CD4-positive, alpha-beta memory T cell (primary cell): ENCODE measurements at regions of chr5 and their contacts with region 1.

Region 1: DNA sequence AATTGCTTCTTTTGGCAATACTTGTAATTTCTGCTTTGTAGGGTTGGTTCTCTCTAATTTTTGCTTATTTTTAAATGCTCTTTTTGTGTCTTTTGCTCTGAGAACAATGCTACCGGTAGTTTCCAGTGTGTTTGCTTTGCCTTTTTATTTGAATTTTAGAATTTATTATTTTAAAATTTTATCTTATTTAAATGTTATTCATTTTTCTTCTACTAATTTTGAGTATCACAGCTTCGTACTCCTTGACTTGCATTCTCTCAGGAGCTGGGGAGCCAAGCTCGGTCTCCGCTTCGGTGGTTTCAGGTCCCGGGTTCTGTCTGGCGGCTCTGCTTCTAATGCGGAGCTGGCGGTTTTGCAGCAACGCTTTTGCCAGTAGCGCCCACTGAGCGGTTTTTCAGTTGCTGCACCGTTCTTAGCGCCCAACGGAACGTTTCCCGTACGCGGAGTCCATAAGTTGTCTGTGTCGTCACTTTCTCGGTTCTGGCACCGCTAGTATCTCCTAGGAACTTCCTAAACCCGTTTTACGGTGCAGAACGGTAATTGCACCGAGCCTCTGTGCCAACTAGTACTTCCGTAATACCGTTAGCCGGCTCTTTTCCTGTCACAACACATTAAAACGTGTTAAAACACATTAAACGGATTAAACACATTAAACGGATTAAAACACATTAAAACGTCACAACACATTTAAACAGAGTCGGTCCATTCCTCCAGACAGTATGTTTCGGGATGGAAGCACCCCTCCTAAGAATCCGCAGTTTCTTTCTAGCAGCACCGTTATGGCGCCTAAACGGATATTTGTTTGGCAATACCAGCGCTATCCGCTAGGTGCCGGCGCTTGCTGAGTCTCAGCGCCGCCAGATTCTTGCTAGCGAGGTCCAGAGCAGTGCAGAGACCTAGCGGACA is 45.6 kb downstream of the ANXA2R start:
- DNase-seq: peak; percentile 86 to 89 (median 88)
- H3K4me3 ChIP-seq: peak overlapping the region; percentile 72 to 76
- H3K4me3 Mint-ChIP-seq: peak overlapping the region; percentile 93 to 100 (median 100)
- H3K27ac ChIP-seq: peak overlapping the region; percentile 93
- H3K27ac Mint-ChIP-seq: peak overlapping the region; percentile 98 to 100 (median 100)
- H3K4me1 ChIP-seq: peaks cover 34% of the 10 kb centered on the region
- H3K4me1 Mint-ChIP-seq: peaks cover 14 to 69% (median 26%) of the 10 kb centered on the region in 4 donors
- H3K27me3 ChIP-seq: no peaks in the 10 kb centered on the region
- H3K27me3 Mint-ChIP-seq: no peaks in the 10 kb centered on the region

Region 2: DNA sequence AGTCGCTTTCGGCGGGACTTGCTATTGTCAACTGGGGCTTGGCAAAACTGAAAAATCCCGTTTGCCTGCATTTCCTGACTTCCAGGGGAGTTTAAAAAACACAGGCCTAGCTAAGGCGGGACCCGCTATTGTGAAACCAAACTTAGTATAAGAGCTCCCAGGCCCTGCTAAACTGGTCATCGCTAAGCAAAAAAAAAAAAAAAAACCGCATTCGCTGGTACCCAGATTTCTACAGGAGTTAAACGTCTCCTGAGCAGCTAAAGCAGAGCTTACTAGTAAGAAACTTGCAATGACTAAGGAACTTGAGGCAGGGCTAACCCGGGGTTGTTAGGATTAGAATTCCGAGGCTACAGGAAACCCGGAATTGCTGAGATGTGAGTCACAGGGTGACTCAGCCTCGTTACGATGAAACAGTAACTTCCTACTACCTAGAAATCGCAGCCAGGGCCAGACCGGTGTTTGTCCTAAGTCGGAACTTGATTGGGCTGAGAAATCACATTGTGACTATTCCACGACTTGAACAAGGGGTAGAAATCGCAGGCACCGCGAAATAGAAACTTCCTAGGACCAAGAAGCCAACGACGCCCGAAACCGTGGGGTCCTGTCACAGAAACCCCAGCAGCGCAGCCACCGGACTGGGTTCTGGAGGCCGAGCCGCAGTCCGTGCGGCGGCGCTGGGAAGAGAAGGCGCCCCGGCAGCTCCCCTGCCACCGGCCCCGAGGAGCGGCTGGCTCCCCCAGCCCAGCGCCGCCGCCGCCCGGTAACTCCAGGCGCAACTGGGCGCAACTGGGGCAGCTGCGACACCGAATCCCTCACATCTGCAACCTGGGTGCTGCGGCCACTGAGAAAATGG is 43.8 kb before region 1 on chr5:
- CTCF ChIA-PET with region 1: interaction called, 116 read pairs
- POLR2A ChIA-PET with region 1: interaction called, 642 read pairs
- intact Hi-C with region 1: loop called (anchors 1 kb)
- DNase-seq: peak; percentile 61 to 90 (median 66)
- H3K4me3 ChIP-seq: peak overlapping the region; percentile 83 to 90
- H3K4me3 Mint-ChIP-seq: peak overlapping the region; percentile 93 to 99 (median 98)
- H3K27ac ChIP-seq: peak overlapping the region; percentile 96
- H3K27ac Mint-ChIP-seq: peak overlapping the region; percentile 99 to 100 (median 100)
- H3K4me1 ChIP-seq: peaks cover 22% of the 10 kb centered on the region
- H3K4me1 Mint-ChIP-seq: peaks cover 7 to 42% (median 30%) of the 10 kb centered on the region in 4 donors
- H3K27me3 ChIP-seq: no peaks in the 10 kb centered on the region
- H3K27me3 Mint-ChIP-seq: no peaks in the 10 kb centered on the region

Region 3: GRCh38 chr5:43008369-43009153 is 14.1 kb after region 1 on chr5:
- CTCF ChIA-PET with region 1: interaction called, 226 read pairs
- POLR2A ChIA-PET with region 1: interaction called, 765 read pairs
- intact Hi-C with region 1: loop called (anchors 1 kb)
- DNase-seq: peak; percentile 89 to 92 (median 90)
- H3K4me3 ChIP-seq: peak overlapping the region; percentile 66 to 84
- H3K4me3 Mint-ChIP-seq: peak overlapping the region; percentile 84 to 94 (median 91)
- H3K27ac ChIP-seq: peak overlapping the region; percentile 85
- H3K27ac Mint-ChIP-seq: peak overlapping the region; percentile 90 to 99 (median 97)
- H3K4me1 ChIP-seq: peaks cover 38% of the 10 kb centered on the region
- H3K4me1 Mint-ChIP-seq: peaks cover 19 to 48% (median 33%) of the 10 kb centered on the region in 4 donors
- H3K27me3 ChIP-seq: no peaks in the 10 kb centered on the region
- H3K27me3 Mint-ChIP-seq: no peaks in the 10 kb centered on the region

Region 4: DNA sequence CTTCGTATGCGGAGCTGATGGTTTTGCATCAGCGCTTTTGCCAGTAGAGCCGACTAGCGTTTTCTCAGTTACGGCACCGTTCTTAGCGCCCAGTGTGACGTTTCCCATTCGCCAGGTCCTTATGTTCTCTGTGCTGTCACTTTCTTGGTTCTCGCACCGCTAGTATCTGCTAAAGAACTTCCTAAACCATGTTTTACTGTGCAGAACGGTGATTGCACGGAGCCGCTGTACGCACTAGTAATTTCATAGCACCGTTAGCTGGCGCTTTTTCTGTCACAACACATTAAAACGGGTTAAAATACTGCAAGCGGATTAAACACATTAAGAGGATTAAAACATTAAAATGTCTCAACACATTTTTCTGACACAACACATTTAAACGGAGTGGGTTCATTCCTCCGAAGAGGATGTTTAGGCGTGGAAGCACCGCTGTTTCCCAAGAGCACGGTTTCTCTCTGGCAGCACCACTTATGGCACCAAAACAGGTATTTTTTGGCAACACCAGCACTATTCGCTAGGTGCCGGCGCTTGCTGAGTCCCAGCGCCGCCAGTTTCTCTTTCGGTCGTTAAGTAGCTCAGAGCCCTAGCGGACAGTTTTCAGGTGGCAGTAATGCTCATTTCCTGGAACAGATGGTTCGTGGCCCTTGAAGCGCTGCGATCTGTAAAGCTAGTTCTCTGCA is 25.3 kb after region 1 on chr5:
- CTCF ChIA-PET with region 1: interaction called, 226 read pairs
- POLR2A ChIA-PET with region 1: interaction called, 991 read pairs
- intact Hi-C with region 1: loop called (anchors 1 kb)
- DNase-seq: peak; percentile 84 to 94 (median 91)
- H3K4me3 ChIP-seq: peak overlapping the region; percentile 73 to 83
- H3K4me3 Mint-ChIP-seq: peak overlapping the region; percentile 94 to 99 (median 98)
- H3K27ac ChIP-seq: peak overlapping the region; percentile 94
- H3K27ac Mint-ChIP-seq: peak overlapping the region; percentile 99 to 100 (median 100)
- H3K4me1 ChIP-seq: peaks cover 40% of the 10 kb centered on the region
- H3K4me1 Mint-ChIP-seq: peaks cover 24 to 67% (median 34%) of the 10 kb centered on the region in 4 donors
- H3K27me3 ChIP-seq: no peaks in the 10 kb centered on the region
- H3K27me3 Mint-ChIP-seq: no peaks in the 10 kb centered on the region

Region 5: DNA sequence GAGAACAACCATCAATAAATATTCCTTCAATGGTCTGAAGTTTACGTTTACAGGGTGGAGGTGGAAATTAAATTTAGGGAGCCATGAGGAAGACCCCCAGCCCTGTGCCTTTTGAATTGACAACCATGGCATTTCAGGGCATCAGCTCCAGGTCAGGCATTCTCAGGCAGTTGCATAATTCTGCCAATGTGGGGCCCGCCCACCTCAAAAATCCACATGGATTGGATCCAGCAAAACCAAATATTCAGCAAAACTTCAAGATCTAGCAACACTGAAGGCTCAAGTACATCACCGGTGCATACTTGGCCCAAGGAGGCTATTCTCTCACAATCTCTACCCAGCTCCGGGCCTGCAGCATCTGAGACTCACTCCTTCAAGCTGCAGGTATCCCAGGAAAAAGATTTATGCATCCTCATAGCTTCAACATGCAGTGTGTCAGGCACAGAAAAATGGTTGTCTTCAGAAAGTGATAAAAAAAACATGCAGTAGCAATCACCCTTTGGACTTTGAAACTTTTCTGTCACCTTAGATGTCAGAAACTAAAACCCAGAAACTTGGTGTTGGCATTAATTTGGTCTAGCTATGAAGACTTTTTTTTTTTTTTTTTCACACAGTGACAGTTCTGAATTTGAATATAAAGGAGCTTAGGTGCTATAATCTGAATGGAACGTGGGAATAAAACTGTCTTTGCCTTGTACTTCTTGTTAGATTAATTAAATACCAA is 67.0 kb after region 1 on chr5:
- CTCF ChIA-PET with region 1: interaction called, 30 read pairs
- POLR2A ChIA-PET with region 1: interaction called, 367 read pairs
- intact Hi-C with region 1: loop called (anchors 1 kb)
- DNase-seq: no peak
- H3K4me3 ChIP-seq: no peak overlapping the region
- H3K4me3 Mint-ChIP-seq: no peak overlapping the region
- H3K27ac ChIP-seq: no peak overlapping the region
- H3K27ac Mint-ChIP-seq: peak overlapping the region; percentile 20 to 93 (median 77)
- H3K4me1 ChIP-seq: peaks cover 8% of the 10 kb centered on the region
- H3K4me1 Mint-ChIP-seq: peaks cover 8 to 17% (median 13%) of the 10 kb centered on the region in 4 donors
- H3K27me3 ChIP-seq: no peaks in the 10 kb centered on the region
- H3K27me3 Mint-ChIP-seq: no peaks in the 10 kb centered on the region

Region 6: GRCh38 chr5:43602461-43603343 is 608.2 kb after region 1 on chr5 and contains the start of gene NNT:
- CTCF ChIA-PET with region 1: no interaction called
- POLR2A ChIA-PET with region 1: interaction called, 14 read pairs
- intact Hi-C with region 1: no loop called
- DNase-seq: peak; percentile 75 to 84 (median 80)
- H3K4me3 ChIP-seq: peak within 1 kb of the TSS; percentile 91 to 99
- H3K4me3 Mint-ChIP-seq: peak within 1 kb of the TSS; percentile 90 to 98 (median 96)
- H3K27ac ChIP-seq: peak within 1 kb of the TSS; percentile 88
- H3K27ac Mint-ChIP-seq: peak within 1 kb of the TSS; percentile 91 to 98 (median 94)
- H3K4me1 ChIP-seq: peaks cover 38% of the 10 kb centered on the region
- H3K4me1 Mint-ChIP-seq: peaks cover 18 to 63% (median 49%) of the 10 kb centered on the region in 4 donors
- H3K27me3 ChIP-seq: no peaks in the 10 kb centered on the region
- H3K27me3 Mint-ChIP-seq: no peaks in the 10 kb centered on the region
- total RNA-seq, gene NNT: 56.1 to 57.6 TPM